PC-9 (cell line): ENCODE measurements at regions of chr9 and their contacts with region 1.

Region 1: GRCh38 chr9:69180670-69181069 is 6.6 kb downstream of the TJP2 start:
- DNase-seq: peak; percentile 86 to 99
- H3K4me3 ChIP-seq: peak overlapping the region; percentile 36; the same call in 1 of the 2 replicates
- H3K27ac ChIP-seq: peak overlapping the region; percentile 97
- H3K4me1 ChIP-seq: peaks cover 79% of the 10 kb centered on the region
- H3K27me3 ChIP-seq: no peaks in the 10 kb centered on the region
- CTCF ChIP-seq: no peak

Region 2: GRCh38 chr9:69131682-69132081 is 49.0 kb before region 1 on chr9:
- CTCF ChIA-PET with region 1: no interaction called
- POLR2A ChIA-PET with region 1: no interaction called
- intact Hi-C with region 1: no loop called
- DNase-seq: no peak
- H3K4me3 ChIP-seq: no peak overlapping the region
- H3K27ac ChIP-seq: no peak overlapping the region
- H3K4me1 ChIP-seq: no peaks in the 10 kb centered on the region
- H3K27me3 ChIP-seq: no peaks in the 10 kb centered on the region
- CTCF ChIP-seq: no peak

Region 3: DNA sequence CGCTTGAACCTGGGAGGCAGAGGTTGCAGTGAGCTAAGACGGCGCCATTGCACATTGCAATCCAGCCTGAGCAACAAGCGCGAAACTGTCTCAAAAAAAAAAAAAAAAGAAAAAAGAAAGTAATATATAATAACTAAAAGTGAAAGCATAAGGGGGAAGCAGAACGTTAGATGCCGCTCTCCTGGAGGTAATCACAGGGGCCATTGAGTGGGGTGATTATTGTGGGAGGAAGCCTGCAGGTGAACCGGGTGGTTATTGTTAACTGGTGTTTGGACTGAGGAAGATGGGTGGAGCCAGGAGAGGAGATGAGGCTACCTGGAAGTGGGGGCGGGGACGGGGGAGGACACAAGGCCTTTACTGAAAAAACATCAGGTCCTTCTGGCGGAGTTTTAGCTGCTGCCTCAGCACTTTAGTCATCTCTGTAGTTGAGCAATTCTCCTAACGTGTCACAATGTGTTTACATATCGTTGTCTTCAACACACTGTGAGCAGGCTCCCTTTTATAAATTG is 11.9 kb before region 1 on chr9:
- CTCF ChIA-PET with region 1: interaction called, 12 read pairs
- POLR2A ChIA-PET with region 1: interaction called, 4 read pairs
- intact Hi-C with region 1: no loop called
- DNase-seq: peak; percentile 48 to 85
- H3K4me3 ChIP-seq: no peak overlapping the region
- H3K27ac ChIP-seq: no peak overlapping the region
- H3K4me1 ChIP-seq: peaks cover 55% of the 10 kb centered on the region
- H3K27me3 ChIP-seq: no peaks in the 10 kb centered on the region
- CTCF ChIP-seq: no peak

Region 4: GRCh38 chr9:69213647-69214046 is 33.0 kb after region 1 on chr9:
- CTCF ChIA-PET with region 1: no interaction called
- POLR2A ChIA-PET with region 1: no interaction called
- intact Hi-C with region 1: no loop called
- DNase-seq: no peak
- H3K4me3 ChIP-seq: no peak overlapping the region
- H3K27ac ChIP-seq: no peak overlapping the region
- H3K4me1 ChIP-seq: no peaks in the 10 kb centered on the region
- H3K27me3 ChIP-seq: no peaks in the 10 kb centered on the region
- CTCF ChIP-seq: no peak